ENCODE measurements at regions of chr4 and their contacts with region 1.

Region 1: GRCh38 chr4:8468746-8469535 is 28.4 kb downstream of the TRMT44 start:
- DNase-seq: peak; percentile 73 to 79
- H3K4me3 ChIP-seq: no peak overlapping the region
- H3K27ac ChIP-seq: peak overlapping the region in 1 of 2 donors; percentile 88
- H3K4me1 ChIP-seq: peaks cover 17 to 21% of the 10 kb centered on the region in 2 donors
- H3K27me3 ChIP-seq: no peaks in the 10 kb centered on the region
- CTCF ChIP-seq: peak; percentile 80 to 94 (median 88)
- POLR2A ChIP-seq: no peak

Region 2: DNA sequence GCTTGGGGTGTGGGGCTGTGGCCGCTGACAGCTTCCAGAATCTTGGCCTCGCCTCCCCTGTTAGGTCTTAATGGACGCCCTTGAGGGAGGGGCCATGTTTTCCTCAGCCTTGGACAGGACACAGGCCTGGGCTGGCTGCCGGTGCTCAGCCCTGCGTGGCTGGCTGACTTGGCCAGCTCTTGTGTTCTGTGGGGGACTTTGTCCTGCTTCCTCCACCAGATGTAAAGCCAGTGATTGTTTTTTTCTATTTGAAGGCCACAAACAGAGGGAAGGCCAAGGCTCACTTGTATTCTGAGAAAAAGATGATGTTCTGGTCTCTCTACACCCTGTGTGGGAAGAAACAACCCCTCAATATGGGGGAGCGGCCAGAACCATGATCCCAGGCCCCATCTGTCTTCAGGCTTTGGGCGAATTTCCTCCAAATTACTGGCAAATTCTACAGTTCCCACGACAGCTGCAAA is 128.1 kb before region 1 on chr4:
- intact Hi-C with region 1: no loop called
- DNase-seq: peak; percentile 84 to 90
- H3K4me3 ChIP-seq: no peak overlapping the region
- H3K27ac ChIP-seq: peak overlapping the region; percentile 71 to 81
- H3K4me1 ChIP-seq: peaks cover 9 to 13% of the 10 kb centered on the region in 2 donors
- H3K27me3 ChIP-seq: no peaks in the 10 kb centered on the region
- CTCF ChIP-seq: peak in 1 of 4 experiments; percentile 6
- POLR2A ChIP-seq: no peak

Region 3: GRCh38 chr4:8506373-8507188 is 37.6 kb after region 1 on chr4:
- intact Hi-C with region 1: no loop called
- DNase-seq: peak; percentile 64 to 65
- H3K4me3 ChIP-seq: no peak overlapping the region
- H3K27ac ChIP-seq: peak overlapping the region; percentile 73 to 86
- H3K4me1 ChIP-seq: peaks cover 6 to 12% of the 10 kb centered on the region in 2 donors
- H3K27me3 ChIP-seq: no peaks in the 10 kb centered on the region
- CTCF ChIP-seq: no peak
- POLR2A ChIP-seq: no peak

Region 4: GRCh38 chr4:8594097-8595038 is 125.4 kb after region 1 on chr4:
- intact Hi-C with region 1: loop called (anchors 10 kb)
- DNase-seq: peak; percentile 50 to 75
- H3K4me3 ChIP-seq: peak overlapping the region in 1 of 2 donors; percentile 45
- H3K27ac ChIP-seq: peak overlapping the region in 1 of 2 donors; percentile 40
- H3K4me1 ChIP-seq: peaks cover 0 to 11% of the 10 kb centered on the region in 2 donors
- H3K27me3 ChIP-seq: no peaks in the 10 kb centered on the region
- CTCF ChIP-seq: peak; percentile 57 to 70 (median 62)
- POLR2A ChIP-seq: no peak

Region 5: GRCh38 chr4:8675383-8675782 is 206.4 kb after region 1 on chr4:
- intact Hi-C with region 1: no loop called
- DNase-seq: no peak
- H3K4me3 ChIP-seq: no peak overlapping the region
- H3K27ac ChIP-seq: no peak overlapping the region
- H3K4me1 ChIP-seq: no peaks in the 10 kb centered on the region
- H3K27me3 ChIP-seq: no peaks in the 10 kb centered on the region
- CTCF ChIP-seq: no peak
- POLR2A ChIP-seq: no peak

Measured in uterus (tissue), 4 donors.